Gastrocnemius medialis (tissue), 4 donors: ENCODE measurements at regions of chr17 and their contacts with region 1.

Region 1: DNA sequence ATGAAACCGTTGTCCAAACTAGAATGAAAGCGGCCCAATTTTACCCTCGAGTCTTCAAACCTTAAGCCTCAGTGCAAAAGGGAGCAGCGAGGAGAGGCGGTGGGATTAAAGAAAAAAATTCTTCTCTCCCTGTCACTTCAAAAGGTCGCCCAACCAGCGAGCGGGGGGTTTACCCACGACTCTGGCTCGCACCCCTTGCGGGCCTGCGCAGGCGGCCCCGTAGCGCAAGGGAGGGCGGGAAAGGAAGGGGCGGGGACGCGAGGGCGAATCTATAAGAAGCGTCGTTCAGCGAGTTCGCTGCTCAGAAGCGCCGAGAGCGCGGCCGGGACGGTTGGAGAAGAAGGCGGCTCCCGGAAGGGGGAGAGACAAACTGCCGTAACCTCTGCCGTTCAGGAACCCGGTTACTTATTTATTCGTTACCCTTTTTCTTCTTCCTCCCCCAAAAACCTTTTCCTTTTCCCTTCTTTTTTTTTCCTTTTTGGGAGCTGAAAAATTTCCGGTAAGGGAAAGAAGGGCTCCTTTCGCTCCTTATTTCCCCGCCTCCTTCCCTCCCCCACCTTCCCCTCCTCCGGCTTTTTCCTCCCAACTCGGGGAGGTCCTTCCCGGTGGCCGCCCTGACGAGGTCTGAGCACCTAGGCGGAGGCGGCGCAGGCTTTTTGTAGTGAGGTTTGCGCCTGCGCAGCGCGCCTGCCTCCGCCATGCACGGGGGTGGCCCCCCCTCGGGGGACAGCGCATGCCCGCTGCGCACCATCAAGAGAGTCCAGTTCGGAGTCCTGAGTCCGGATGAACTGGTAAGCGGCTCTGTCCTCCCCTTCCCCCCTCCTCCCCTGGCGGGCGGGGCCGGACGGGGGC is at the start of gene POLR2A:
- DNase-seq: peak; percentile 96 to 99
- ATAC-seq: peak; percentile 71 to 76
- H3K4me3 ChIP-seq: peak within 1 kb of the TSS; percentile 82 to 90 (median 86)
- H3K27ac ChIP-seq: peak within 1 kb of the TSS; percentile 100
- H3K4me1 ChIP-seq: peaks cover 49 to 70% of the 10 kb centered on the region in 2 donors
- H3K27me3 ChIP-seq: no peaks in the 10 kb centered on the region
- CTCF ChIP-seq: no peak
- POLR2A ChIP-seq: peak; percentile 100
- total RNA-seq, gene POLR2A: 20.3 to 56.9 (median 39.3) TPM

Region 2: DNA sequence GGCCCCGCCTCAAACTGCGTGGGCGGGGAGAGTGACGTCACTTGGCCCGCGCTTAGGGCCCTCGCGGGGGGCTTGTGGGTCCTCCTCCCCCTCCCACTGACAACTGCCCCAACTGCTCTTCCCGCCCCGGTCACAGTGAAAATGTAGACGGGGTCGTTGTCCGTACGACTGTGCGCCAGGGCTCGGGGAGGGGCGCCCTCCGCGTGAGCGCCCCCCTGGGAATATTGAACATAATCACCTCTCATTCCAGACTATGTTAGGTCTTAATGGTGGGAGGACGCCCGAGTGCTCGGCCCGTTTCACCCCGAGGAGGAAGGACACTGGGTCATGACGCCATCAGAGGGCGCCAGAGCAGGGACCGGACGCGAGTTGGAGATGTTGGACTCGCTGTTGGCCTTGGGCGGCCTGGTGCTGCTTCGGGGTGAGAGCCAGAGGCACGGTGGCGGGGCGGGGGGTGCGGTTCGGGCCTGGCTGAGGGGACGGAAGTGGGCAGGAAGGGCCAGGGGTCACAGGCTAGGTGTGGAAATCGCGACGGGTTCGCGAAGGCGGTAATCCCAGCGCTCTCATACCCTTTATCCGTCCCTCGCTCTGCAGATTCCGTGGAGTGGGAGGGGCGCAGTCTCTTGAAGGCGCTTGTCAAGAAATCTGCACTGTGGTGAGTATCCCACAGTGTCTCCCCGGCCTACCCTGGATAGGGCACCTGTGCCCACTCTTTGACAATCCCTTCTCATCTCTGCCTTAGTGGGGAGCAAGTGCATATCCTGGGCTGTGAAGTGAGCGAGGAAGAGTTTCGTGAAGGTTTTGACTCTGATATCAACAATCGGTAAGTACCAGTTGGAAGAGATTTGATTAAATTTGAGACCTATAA is 231.9 kb before region 1 on chr17 and contains the start of gene ELP5:
- in situ Hi-C with region 1: no loop called
- intact Hi-C with region 1: loop called (anchors 2 kb)
- DNase-seq: peak; percentile 86 to 92
- ATAC-seq: peak; percentile 58 to 61
- H3K4me3 ChIP-seq: peak within 1 kb of the TSS; percentile 69 to 98 (median 81)
- H3K27ac ChIP-seq: peak within 1 kb of the TSS; percentile 98 to 100 (median 98)
- H3K4me1 ChIP-seq: peaks cover 39 to 43% of the 10 kb centered on the region in 2 donors
- H3K27me3 ChIP-seq: no peaks in the 10 kb centered on the region
- CTCF ChIP-seq: peak in 3 of 5 experiments; percentile 36 to 54 (median 40)
- POLR2A ChIP-seq: peak in 1 of 2 donors; percentile 70
- total RNA-seq, gene ELP5: 13.3 to 52.7 (median 26.7) TPM

Region 3: GRCh38 chr17:7394452-7395191 is 89.7 kb before region 1 on chr17 and contains the start of gene PLSCR3:
- in situ Hi-C with region 1: no loop called
- intact Hi-C with region 1: loop called (anchors 1 kb)
- DNase-seq: peak; percentile 64 to 81
- ATAC-seq: peak; percentile 89 to 91
- H3K4me3 ChIP-seq: peak within 1 kb of the TSS; percentile 73 to 97 (median 88)
- H3K27ac ChIP-seq: peak within 1 kb of the TSS; percentile 83 to 97 (median 90)
- H3K4me1 ChIP-seq: peaks cover 9 to 10% of the 10 kb centered on the region in 2 donors
- H3K27me3 ChIP-seq: no peaks in the 10 kb centered on the region
- CTCF ChIP-seq: peak; percentile 32 to 61 (median 42)
- POLR2A ChIP-seq: peak; percentile 93
- total RNA-seq, gene PLSCR3: 8.9 to 20.3 (median 14.4) TPM

Region 4: DNA sequence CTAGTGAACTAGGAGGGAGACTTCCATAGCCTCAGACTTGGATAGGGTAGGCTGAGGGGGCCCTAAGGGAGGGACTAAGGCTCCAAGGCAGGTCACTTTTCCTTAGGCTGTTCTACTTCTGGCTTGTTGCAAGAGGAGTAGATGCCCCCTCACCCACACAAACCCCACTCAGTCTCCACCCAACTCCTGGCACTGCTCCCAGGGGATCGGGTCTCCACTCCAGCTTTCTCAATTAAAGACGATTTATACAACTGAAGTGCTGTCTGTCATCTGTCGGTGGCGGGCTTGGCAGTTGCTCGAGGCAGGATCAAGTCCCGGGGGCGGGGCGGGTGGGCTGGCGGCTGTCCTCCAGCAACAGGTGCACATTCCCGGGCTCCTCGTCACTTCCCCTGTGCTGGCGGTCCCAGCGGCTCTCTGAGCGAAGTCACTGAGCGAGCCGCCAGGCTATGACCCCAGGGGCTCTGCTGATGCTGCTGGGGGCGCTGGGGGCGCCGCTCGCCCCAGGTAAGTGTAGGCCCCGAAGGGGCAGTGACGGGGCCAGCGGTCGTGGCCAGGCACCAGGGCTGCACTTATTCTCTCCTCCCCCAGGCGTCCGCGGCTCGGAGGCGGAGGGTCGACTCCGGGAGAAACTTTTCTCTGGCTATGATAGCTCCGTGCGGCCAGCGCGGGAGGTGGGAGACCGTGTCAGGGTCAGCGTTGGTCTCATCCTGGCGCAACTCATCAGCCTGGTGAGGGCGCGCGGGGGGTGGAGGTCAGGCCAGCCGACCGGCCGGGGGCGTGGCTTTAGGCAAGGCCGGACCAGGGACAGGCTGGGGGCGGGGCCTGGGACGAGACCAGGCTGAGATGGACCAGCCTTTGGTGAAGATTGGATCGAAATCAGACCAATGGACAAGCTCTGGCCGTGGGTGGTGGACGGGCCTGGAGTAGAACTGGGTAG is 39.3 kb before region 1 on chr17 and contains the start of gene CHRNB1:
- in situ Hi-C with region 1: loop called in 1 of 4 experiments (anchors 5 kb)
- intact Hi-C with region 1: no loop called
- DNase-seq: peak; percentile 78 to 91
- ATAC-seq: peak; percentile 78 to 81
- H3K4me3 ChIP-seq: peak within 1 kb of the TSS; percentile 69 to 87 (median 77)
- H3K27ac ChIP-seq: peak within 1 kb of the TSS; percentile 94 to 100 (median 98)
- H3K4me1 ChIP-seq: peaks cover 22 to 42% of the 10 kb centered on the region in 2 donors
- H3K27me3 ChIP-seq: no peaks in the 10 kb centered on the region
- CTCF ChIP-seq: peak in 3 of 5 experiments; percentile 18 to 34 (median 34)
- POLR2A ChIP-seq: peak; percentile 75 to 87
- total RNA-seq, gene CHRNB1: 82.3 to 202 (median 101) TPM

Region 5: GRCh38 chr17:7844292-7845154 is 360.2 kb after region 1 on chr17:
- in situ Hi-C with region 1: no loop called
- intact Hi-C with region 1: loop called (anchors 2 kb)
- DNase-seq: peak; percentile 93 to 95
- ATAC-seq: peak; percentile 70 to 73
- H3K4me3 ChIP-seq: peak overlapping the region; percentile 80 to 96 (median 88)
- H3K27ac ChIP-seq: peak overlapping the region; percentile 97 to 100 (median 100)
- H3K4me1 ChIP-seq: peaks cover 28 to 32% of the 10 kb centered on the region in 2 donors
- H3K27me3 ChIP-seq: no peaks in the 10 kb centered on the region
- CTCF ChIP-seq: no peak
- POLR2A ChIP-seq: peak; percentile 97

Region 6: GRCh38 chr17:8060274-8060673 is 576.0 kb after region 1 on chr17:
- in situ Hi-C with region 1: no loop called
- intact Hi-C with region 1: no loop called
- DNase-seq: peak in 1 of 2 donors; percentile 25
- ATAC-seq: peak in 1 of 2 donors; percentile 73
- H3K4me3 ChIP-seq: no peak overlapping the region
- H3K27ac ChIP-seq: no peak overlapping the region
- H3K4me1 ChIP-seq: peaks cover 8% of the 10 kb centered on the region in 2 donors
- H3K27me3 ChIP-seq: peaks cover 44 to 63% (median 50%) of the 10 kb centered on the region in 3 donors
- CTCF ChIP-seq: peak; percentile 55 to 78 (median 73)
- POLR2A ChIP-seq: no peak